Activated CD4-positive, alpha-beta T cell treated with anti-CD3 and anti-CD28 coated beads for 36 hours (primary cell): ENCODE measurements at regions of chr17 and their contacts with region 1.

Region 1: DNA sequence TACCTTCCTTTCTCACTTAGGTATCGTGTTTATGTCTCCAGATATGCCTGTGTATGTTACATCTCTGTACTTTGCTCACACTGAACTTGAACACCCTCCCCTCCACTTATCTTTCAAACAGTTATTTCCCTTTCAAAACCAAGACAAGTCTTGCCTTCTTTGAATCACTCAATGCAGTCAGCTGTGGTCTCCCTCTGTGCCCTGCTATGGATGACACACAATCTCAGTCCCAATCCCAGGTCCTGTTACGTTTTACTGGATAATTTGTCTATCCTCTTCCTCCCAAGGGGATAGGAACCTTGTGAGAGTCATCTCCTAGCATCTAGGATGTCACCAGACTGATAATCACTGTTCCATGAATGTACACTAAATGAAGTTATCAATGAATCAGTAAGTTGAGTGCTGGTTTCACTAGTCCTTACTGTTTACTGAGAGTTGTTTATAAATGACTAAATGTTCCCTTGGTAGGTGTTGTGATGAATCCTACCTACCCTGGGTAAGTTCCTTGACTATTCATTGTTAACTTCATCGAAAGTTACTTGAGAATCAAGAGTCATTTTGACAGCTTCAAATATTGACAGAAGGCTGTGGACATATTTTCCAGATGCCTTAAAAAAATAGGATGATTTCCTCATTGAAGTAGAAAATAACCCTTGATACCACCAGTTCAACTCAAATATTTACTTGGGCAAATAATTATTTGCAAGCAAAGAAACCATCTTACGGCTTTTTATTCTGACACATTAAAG is 244.9 kb downstream of the PRKCA start:
- DNase-seq: no peak
- ATAC-seq: peak; percentile 80
- H3K4me3 Mint-ChIP-seq: no peak overlapping the region
- H3K27ac Mint-ChIP-seq: peak overlapping the region; percentile 81
- H3K4me1 Mint-ChIP-seq: peaks cover 63% of the 10 kb centered on the region
- H3K27me3 Mint-ChIP-seq: no peaks in the 10 kb centered on the region

Region 2: GRCh38 chr17:66508896-66509843 is 38.1 kb before region 1 on chr17:
- CTCF ChIA-PET with region 1: no interaction called
- POLR2A ChIA-PET with region 1: no interaction called
- intact Hi-C with region 1: loop called (anchors 1 kb)
- DNase-seq: peak; percentile 80
- ATAC-seq: peak; percentile 68
- H3K4me3 Mint-ChIP-seq: peak overlapping the region; percentile 49
- H3K27ac Mint-ChIP-seq: peak overlapping the region; percentile 93
- H3K4me1 Mint-ChIP-seq: peaks cover 72% of the 10 kb centered on the region
- H3K27me3 Mint-ChIP-seq: no peaks in the 10 kb centered on the region

Region 3: GRCh38 chr17:66573078-66573477 is 25.8 kb after region 1 on chr17:
- CTCF ChIA-PET with region 1: no interaction called
- POLR2A ChIA-PET with region 1: no interaction called
- intact Hi-C with region 1: loop called in 1 of 2 experiments (anchors 2 kb)
- DNase-seq: no peak
- ATAC-seq: peak; percentile 83
- H3K4me3 Mint-ChIP-seq: no peak overlapping the region
- H3K27ac Mint-ChIP-seq: no peak overlapping the region
- H3K4me1 Mint-ChIP-seq: peaks cover 17% of the 10 kb centered on the region
- H3K27me3 Mint-ChIP-seq: no peaks in the 10 kb centered on the region

Region 4: DNA sequence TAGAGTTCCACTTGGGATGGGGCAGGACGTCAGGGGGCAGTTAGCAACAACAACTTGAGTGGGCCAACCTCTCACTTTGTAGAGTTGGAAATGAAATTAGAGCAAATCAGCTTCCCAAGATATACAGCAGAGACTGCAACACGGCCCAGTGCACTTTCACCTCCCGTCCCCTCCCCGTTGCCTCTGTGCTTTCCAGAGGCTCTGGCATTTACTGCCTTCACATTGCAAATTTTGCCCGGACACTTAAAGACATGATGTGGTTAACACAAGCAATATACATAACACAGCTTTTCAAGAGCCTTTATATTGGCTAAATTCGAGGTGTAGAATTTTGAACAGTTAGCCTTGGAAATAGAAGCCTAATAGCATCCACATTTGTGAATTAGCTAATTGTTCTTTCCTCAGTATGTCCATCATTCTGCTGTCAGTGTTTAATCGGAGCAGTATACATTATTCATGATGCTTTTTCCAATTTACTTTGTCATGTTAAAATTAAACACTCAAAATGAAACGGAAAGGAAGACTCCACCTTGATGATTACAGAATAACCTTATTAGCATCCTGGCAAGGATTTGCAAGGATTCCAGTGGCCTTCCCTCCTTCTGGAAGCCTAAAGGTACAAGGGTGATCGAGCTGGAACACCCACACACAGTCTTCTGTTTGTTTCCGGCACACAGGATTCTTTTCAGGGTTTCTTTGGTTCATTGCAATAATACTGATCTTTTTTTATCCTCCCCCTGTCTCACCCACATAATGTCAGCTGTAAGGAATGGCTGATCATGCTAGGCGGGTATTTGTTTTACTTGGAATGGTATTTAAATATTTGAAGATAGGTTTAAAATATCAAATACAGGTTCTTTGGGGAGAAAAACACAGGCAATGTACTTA is 96.8 kb after region 1 on chr17:
- CTCF ChIA-PET with region 1: no interaction called
- POLR2A ChIA-PET with region 1: no interaction called
- intact Hi-C with region 1: no loop called
- DNase-seq: no peak
- ATAC-seq: no peak
- H3K4me3 Mint-ChIP-seq: no peak overlapping the region
- H3K27ac Mint-ChIP-seq: no peak overlapping the region
- H3K4me1 Mint-ChIP-seq: peaks cover 4% of the 10 kb centered on the region
- H3K27me3 Mint-ChIP-seq: no peaks in the 10 kb centered on the region